Cardiac septum (tissue), 1 donor: ENCODE measurements at regions of chr10 and their contacts with region 1.

Region 1: GRCh38 chr10:30751678-30752331 is 122.3 kb upstream of the LYZL2 start:
- DNase-seq: peak; percentile 83

Region 2: GRCh38 chr10:30928742-30929141 is 176.9 kb after region 1 on chr10:
- intact Hi-C with region 1: no loop called
- DNase-seq: no peak

Region 3: DNA sequence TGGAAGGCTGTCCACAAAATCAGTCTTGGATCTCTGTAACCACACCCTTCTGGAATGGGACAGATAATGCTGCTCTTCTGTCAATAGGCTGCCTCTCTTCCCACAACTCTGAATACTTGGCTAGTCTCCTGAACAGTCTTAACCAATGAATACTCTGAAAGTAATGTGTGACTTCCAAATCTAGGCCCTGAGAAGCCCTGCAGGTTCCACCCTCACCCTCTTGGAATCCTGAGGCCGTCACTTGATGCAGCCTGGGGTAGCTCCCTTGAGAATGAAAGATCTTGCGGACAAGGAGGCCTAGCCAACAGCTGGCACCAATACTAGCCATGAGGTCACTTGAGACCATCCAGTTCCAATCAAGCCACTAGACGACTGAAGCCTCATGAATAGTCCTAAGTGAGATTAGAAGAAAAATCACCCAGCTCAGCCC is 1067.6 kb after region 1 on chr10:
- intact Hi-C with region 1: loop called (anchors 10 kb)
- DNase-seq: no peak